HepG2 (cell line): ENCODE measurements at regions of chr7 and their contacts with region 1.

Region 1: DNA sequence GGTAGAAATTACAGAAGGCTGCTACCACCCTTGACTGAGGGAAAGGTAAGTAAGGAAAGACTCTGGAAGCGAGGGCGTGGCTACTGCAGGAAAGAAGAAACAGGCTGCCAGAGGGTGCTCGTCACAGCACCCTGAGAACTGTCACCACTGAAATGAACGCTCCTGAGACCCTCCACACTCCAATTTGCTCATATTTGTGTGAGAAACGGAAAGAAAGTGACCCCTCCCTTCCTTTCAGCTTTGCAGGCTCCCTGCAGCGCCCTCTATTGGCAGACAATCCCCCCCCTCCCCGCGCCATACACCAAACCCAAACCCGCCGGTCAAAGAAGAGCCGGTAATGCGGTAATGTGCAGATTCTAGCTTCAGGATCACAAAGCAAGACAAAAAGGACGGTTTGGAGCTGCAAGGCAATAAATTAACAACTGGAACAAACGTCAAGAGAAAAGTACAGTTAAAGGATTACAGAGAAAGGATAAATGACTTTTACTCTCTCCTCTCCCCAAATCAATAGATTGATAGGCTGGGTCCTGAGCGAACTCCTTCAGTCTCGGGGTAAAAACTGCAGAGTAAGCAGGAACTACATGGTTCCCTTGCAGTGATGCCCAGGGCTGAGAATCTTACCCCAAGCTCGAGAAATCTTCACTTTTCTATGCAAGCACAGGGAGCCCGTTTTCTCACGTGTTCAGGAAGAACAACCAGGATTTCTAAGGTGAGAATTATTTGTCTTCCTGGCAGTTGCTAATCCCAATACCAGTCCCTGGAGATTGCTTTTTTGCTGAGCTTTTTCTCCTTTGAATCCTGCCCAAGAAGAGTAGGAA is 47.6 kb downstream of the STEAP1B start:
- DNase-seq: peak; percentile 47
- ATAC-seq: peak; percentile 98
- H3K4me3 ChIP-seq: peak overlapping the region; percentile 53 to 70 (median 55)
- H3K27ac ChIP-seq: no peak overlapping the region
- H3K4me1 ChIP-seq: peaks cover 19% of the 10 kb centered on the region
- H3K27me3 ChIP-seq: peaks cover 0 to 14% of the 10 kb centered on the region in 2 experiments; a peak in 3 of 5 replicates
- CTCF ChIP-seq: peak; percentile 94
- EP300 ChIP-seq: no peak
- POLR2A ChIP-seq: no peak
- RAD21 ChIP-seq: peak; percentile 75

Region 2: GRCh38 chr7:22319424-22320403 is 132.6 kb before region 1 on chr7:
- CTCF ChIA-PET with region 1: no interaction called
- POLR2A ChIA-PET with region 1: no interaction called
- in situ Hi-C with region 1: no loop called
- intact Hi-C with region 1: loop called (anchors 10 kb)
- DNase-seq: no peak
- ATAC-seq: no peak
- H3K4me3 ChIP-seq: no peak overlapping the region
- H3K27ac ChIP-seq: no peak overlapping the region
- H3K4me1 ChIP-seq: peaks cover 15% of the 10 kb centered on the region
- H3K27me3 ChIP-seq: no peaks in the 10 kb centered on the region
- CTCF ChIP-seq: no peak
- EP300 ChIP-seq: no peak
- POLR2A ChIP-seq: no peak
- RAD21 ChIP-seq: no peak

Region 3: GRCh38 chr7:22771194-22771871 is 319.0 kb after region 1 on chr7:
- CTCF ChIA-PET with region 1: no interaction called
- POLR2A ChIA-PET with region 1: no interaction called
- in situ Hi-C with region 1: no loop called
- intact Hi-C with region 1: no loop called
- DNase-seq: no peak
- ATAC-seq: no peak
- H3K4me3 ChIP-seq: no peak overlapping the region
- H3K27ac ChIP-seq: no peak overlapping the region
- H3K4me1 ChIP-seq: peaks cover 28% of the 10 kb centered on the region
- H3K27me3 ChIP-seq: no peaks in the 10 kb centered on the region
- CTCF ChIP-seq: no peak
- EP300 ChIP-seq: no peak
- POLR2A ChIP-seq: no peak
- RAD21 ChIP-seq: no peak